AG04450 (cell line): ENCODE measurements at regions of chr10 and their contacts with region 1.

Region 1: DNA sequence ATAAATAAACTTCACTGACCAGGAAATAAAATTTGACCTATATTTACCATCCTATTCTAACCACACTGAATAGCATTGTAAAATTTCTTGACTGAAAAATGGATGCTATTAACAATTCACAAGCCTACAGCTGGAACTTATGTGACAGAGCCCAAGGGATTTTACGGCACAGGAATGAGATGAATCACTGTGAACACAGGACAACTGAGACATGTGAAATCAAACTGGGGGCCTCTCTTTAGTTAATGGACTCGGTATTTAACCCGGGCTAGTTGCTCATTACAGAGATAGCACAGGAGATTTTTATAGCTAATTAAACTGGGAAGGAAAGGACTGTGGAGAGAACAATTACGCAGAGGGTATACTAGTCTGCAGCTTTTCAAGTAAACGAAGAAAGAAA is 100.6 kb downstream of the MICU1 start:
- DNase-seq: no peak
- H3K4me3 ChIP-seq: no peak overlapping the region
- H3K27ac ChIP-seq: no peak overlapping the region
- H3K27me3 ChIP-seq: no peaks in the 10 kb centered on the region
- CTCF ChIP-seq: no peak

Region 2: DNA sequence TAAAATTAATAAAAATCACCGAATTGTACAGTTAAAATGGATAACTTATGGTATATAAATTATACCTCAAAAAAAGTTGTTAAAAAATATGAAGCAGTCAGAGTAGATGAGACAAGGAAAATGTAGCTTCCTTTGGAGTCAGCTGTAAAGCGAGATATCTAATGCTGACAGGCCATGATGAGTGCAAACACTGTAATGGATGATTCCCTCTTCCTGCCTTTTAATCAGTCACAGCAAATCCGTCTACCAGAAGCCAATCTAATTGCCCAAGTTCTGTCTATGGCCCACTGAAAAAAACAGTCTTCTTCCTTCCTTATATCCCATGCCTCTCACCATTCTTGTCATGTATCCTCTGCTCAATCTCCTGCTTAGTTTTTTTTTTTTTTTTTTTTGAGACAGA is 110.6 kb before region 1 on chr10:
- CTCF ChIA-PET with region 1: no interaction called
- POLR2A ChIA-PET with region 1: no interaction called
- DNase-seq: no peak
- H3K4me3 ChIP-seq: no peak overlapping the region
- H3K27ac ChIP-seq: no peak overlapping the region
- H3K27me3 ChIP-seq: no peaks in the 10 kb centered on the region
- CTCF ChIP-seq: no peak

Region 3: DNA sequence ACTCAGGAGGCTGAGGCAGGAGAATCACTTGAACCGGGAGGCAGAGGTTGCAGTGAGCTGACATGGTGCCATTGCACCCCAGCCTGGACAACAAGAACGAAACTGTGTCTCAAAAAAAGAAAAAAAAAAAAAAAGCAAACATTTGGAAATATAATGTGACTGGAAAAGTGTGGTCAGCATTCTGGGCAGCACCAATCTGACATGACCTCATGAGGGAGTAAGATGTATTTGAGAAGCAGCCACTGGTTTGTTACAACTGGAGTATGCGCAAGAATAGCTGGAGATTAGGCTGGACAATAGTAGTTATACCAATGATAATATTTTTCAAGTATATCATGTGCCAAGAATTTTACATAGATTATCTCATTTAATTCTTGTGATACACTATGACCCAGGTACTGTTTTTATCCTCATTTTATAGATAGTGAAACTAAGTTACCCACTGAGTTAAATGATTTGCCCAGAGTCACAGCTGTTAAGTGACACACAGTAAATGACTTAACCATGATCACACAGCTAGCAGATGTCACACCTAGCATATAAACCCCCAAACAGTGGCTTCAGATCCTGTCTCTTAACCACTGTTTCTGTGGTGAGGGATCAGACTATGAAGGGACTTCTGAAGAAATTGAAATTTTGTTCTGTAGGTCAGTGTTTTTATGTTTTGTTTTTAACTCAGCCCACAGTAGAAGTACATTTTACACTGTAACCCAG is 177.7 kb after region 1 on chr10:
- CTCF ChIA-PET with region 1: no interaction called
- POLR2A ChIA-PET with region 1: interaction called, 10 read pairs
- DNase-seq: no peak
- H3K4me3 ChIP-seq: no peak overlapping the region
- H3K27ac ChIP-seq: no peak overlapping the region
- H3K27me3 ChIP-seq: no peaks in the 10 kb centered on the region
- CTCF ChIP-seq: 0 out of 2 replicates have a peak, but pooled peaks have one; percentile 12